ENCODE measurements at regions of chr14 and their contacts with region 1.

Region 1: DNA sequence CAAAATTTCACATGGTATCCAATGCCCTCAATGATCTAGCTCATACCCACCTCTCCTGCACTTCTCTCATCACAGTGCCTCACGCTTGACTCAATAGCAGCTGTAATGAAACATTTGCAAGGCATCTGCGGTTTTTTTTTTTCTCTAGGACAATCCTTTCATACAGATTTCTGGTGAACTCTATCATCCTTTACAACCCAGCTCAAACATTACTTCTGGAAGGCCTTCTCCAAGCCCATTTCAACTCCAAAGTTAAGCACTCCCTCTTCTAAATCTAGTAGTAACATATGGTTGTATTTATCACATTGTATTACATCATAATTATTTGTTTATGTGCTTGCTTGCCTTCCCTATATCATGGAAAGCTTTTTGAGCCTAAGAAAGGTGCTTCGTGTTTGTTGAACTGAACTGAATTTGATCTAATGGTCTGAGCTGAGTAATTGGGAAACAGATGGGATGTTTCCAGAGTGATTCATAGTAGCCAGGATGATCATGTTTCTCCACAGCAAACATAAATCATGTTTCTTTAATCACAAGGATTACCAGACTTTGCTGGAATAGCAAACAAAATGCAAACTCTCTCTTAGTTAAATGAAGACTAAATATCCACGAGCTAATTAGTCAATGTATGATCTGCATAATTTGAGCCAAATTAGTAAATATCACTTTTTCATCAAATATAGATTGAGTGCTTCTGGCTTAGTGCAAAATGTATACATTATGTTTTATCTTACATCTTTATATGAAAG is 14.3 kb downstream of the CFL2 start:
- DNase-seq: no peak
- H3K4me3 ChIP-seq: no peak overlapping the region
- H3K27ac ChIP-seq: no peak overlapping the region
- H3K4me1 ChIP-seq: no peaks in the 10 kb centered on the region
- CTCF ChIP-seq: no peak

Region 2: GRCh38 chr14:34714320-34715126 is 14.5 kb after region 1 on chr14 and contains the start of gene CFL2:
- CTCF ChIA-PET with region 1: interaction called, 3 read pairs
- POLR2A ChIA-PET with region 1: interaction called, 17 read pairs
- intact Hi-C with region 1: no loop called
- DNase-seq: peak; percentile 79
- H3K4me3 ChIP-seq: peak within 1 kb of the TSS; percentile 92
- H3K27ac ChIP-seq: peak within 1 kb of the TSS; percentile 87
- H3K4me1 ChIP-seq: peaks cover 48% of the 10 kb centered on the region
- CTCF ChIP-seq: no peak
- total RNA-seq, gene CFL2: 7.1 and 19.6 TPM in 2 replicates

Region 3: GRCh38 chr14:35174342-35174741 is 474.3 kb after region 1 on chr14:
- CTCF ChIA-PET with region 1: no interaction called
- POLR2A ChIA-PET with region 1: no interaction called
- intact Hi-C with region 1: no loop called
- DNase-seq: no peak
- H3K4me3 ChIP-seq: no peak overlapping the region
- H3K27ac ChIP-seq: no peak overlapping the region
- H3K4me1 ChIP-seq: no peaks in the 10 kb centered on the region
- CTCF ChIP-seq: no peak